ENCODE measurements at regions of chr1 and their contacts with region 1.

Region 1: DNA sequence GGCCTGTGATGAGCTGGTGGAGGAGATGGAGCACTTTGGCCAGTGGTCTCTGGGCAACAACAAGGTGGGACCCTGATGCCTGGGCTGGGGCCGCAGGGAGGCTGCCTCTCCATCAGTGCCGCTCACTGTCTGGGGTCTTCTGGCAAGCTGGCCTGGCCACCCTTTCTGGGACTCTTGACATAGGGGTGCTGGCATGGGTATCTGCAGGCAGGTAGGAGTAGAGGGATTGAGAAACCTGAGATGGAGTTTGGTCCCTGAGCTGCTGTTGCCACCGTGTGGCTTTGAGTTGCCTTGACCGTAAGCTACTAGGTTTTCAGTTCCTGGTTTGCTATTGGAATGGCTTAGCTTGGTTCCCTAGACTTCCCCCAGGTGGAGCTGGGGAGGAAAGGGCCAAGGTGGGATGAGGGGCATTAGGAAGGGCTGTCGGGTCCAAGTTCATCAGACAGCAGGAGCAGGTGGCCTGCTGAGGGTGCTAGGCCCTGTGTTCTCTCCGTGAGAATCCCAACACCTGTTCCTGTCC is 13.2 kb upstream of the MFN2 start:
- DNase-seq: peak; percentile 50 to 77 (median 64)
- ATAC-seq: peak; percentile 95
- H3K4me3 ChIP-seq: no peak overlapping the region
- H3K27ac ChIP-seq: no peak overlapping the region
- H3K4me1 ChIP-seq: peaks cover 0 to 17% of the 10 kb centered on the region in 2 experiments; a peak in 2 of 5 replicates
- H3K27me3 ChIP-seq: no peaks in the 10 kb centered on the region
- CTCF ChIP-seq: peak; percentile 75 to 95 (median 92)
- EP300 ChIP-seq: no peak
- POLR2A ChIP-seq: no peak
- RAD21 ChIP-seq: peak; percentile 67 to 91

Region 2: GRCh38 chr1:12014141-12014991 is 47.3 kb after region 1 on chr1:
- CTCF ChIA-PET with region 1: no interaction called
- POLR2A ChIA-PET with region 1: no interaction called
- in situ Hi-C with region 1: no loop called
- intact Hi-C with region 1: loop called (anchors 1 kb)
- DNase-seq: peak; percentile 61 to 72 (median 64)
- ATAC-seq: peak; percentile 45
- H3K4me3 ChIP-seq: no peak overlapping the region
- H3K27ac ChIP-seq: peak overlapping the region; percentile 75
- H3K4me1 ChIP-seq: peaks cover 37 to 45% of the 10 kb centered on the region in 2 experiments
- H3K27me3 ChIP-seq: no peaks in the 10 kb centered on the region
- CTCF ChIP-seq: peak; percentile 36 to 56 (median 54); a peak in 5 of 6 replicates
- EP300 ChIP-seq: no peak
- POLR2A ChIP-seq: peak; percentile 60; the same call in 1 of the 2 replicates
- RAD21 ChIP-seq: 0 out of 4 replicates have a peak, but pooled peaks of 1 of the 2 experiments have one; percentile 3

Region 3: DNA sequence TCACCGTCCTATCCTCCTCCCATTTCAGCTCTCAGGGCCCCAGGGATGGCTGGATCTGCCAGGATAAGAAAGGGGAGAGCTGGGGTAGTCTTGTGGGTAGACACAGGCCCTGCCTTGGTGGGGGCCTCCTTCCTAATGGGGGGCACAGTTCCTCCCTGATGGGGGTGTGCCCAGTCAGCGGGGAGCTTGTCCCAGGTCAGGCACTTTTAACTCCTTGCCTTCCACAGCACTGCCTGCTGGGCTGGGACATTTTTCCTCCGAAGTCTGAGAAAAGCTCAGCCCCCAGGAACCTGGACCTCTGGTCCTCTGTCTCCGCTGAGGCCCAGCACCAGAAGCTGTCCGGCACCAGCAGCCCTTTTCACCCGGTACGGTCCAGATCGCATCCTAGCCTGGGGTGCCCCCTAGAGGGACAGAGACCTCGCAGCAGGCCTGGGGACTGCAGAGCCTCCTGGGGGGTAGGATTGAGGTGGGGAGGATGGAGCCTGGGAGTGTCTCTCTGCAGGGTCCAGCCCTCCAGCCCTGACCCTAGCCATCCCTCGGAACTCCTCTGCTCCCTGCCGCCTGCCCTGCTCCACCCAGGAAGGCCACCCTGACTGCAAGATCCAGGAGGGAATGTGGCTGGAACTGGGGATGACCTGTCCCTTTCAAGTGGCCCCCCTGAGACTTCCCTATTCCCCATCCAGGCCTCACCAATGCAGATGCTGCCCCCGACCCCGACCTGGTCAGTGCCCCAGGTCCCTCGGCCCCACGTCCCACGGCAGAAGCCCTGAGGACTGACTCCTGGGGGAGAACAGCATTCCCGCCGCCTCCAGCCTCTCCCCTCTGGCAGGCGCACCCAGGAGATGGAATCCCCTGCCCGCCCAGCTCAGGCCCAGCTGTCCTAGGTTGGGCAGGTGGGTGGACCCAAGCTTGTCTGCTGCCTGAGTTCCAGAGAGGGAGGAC is 64.2 kb after region 1 on chr1:
- CTCF ChIA-PET with region 1: no interaction called
- POLR2A ChIA-PET with region 1: no interaction called
- in situ Hi-C with region 1: no loop called
- intact Hi-C with region 1: loop called (anchors 1 kb)
- DNase-seq: peak; percentile 70 to 83 (median 80)
- ATAC-seq: peak; percentile 94
- H3K4me3 ChIP-seq: no peak overlapping the region
- H3K27ac ChIP-seq: no peak overlapping the region
- H3K4me1 ChIP-seq: peaks cover 8 to 34% of the 10 kb centered on the region in 2 experiments; a peak in 4 of 5 replicates
- H3K27me3 ChIP-seq: no peaks in the 10 kb centered on the region
- CTCF ChIP-seq: peak; percentile 88 to 91 (median 89)
- EP300 ChIP-seq: no peak
- POLR2A ChIP-seq: no peak
- RAD21 ChIP-seq: peak; percentile 80 to 90